Body of pancreas (tissue), 4 donors: ENCODE measurements at regions of chr6 and their contacts with region 1.

Region 1: DNA sequence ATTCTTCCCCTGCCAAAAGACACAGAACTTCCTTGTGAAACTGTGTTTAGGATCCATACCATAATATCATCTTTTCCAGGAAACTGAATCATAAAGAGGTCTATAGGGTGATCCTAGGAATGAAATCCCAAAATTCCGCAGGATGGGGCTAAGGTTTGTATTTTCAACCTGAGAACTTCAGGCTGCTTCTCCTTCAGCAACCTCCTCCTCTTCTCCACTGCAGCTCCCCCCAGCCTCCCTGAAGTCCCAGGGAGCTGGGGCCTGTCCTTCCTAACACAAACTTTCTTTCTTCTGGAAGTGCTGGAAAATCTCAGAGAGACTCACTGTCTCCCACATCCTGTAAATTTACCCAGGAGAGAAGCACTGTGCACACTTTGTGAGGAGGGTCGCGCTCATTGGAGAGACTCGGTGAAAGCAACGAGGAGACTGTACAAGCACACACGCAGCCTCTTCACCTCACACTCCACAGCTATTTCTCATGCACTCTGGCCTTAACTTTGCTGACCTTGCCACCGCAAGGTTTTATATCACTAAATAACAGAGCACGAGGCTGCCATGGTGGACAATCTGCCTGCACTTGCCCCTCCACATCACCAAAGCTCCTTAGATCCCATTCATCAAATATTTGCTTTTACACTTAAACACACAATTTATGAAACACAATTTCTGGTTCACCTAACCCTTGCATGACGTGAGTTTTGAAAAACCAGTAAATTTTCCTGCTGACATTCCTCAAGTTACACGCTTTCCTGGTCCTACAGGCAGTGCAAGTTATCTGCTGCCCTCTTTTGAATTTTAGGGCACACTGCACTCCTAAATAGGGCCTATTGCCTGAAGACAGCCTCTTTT is 14.3 kb downstream of the ID4 start:
- DNase-seq: peak; percentile 39 to 76 (median 52)
- ATAC-seq: peak; percentile 97
- H3K4me3 ChIP-seq: no peak overlapping the region
- H3K27ac ChIP-seq: peak overlapping the region in 3 of 4 donors; percentile 25 to 46 (median 44)
- H3K4me1 ChIP-seq: peaks cover 6% of the 10 kb centered on the region
- H3K27me3 ChIP-seq: no peaks in the 10 kb centered on the region
- CTCF ChIP-seq: peak; percentile 82 to 97 (median 89)
- POLR2A ChIP-seq: no peak

Region 2: DNA sequence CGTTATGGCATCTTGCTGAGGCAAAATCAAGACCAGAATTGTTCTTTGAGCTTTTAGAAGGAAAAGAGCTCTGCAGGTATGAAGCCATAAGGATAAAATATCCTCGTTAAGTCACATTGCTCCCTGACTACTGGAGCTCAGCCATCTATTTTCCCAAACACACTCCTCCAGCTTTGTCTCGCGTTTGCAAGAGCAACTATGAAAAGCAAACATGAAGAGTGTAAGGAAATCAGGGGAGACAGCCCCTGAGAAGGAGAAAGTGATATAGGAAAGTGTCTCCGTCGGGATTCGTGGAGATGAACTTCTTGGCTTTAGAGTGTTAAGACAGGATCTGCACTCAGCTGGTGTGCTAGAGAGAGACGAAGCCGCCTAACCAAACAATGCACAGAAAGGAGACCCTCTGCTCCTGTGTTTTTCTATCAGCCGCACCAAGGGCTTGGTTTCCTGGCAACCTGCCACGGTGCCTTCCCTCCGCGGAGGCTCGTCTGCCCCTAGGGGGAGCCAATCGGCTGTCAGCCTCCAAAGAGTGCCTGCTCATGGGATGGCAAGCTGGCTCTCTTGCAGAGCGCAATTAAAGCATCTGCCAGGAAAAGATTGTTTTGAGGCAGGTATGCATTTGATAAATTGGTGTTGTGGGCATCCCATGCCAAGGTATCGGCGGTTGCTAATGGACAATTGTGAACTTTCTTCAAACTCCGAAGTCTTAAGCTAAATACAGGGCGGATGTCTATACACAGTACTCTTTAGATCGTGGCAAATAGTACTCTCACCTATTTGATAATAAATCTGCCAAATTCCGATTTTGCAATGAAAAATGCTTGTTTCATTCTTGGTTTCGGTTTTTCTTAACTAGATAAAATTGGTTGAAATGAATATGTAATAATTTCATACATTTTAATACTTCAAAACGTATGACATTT is 861.1 kb before region 1 on chr6:
- intact Hi-C with region 1: loop called (anchors 10 kb)
- DNase-seq: peak; percentile 64 to 82 (median 75)
- ATAC-seq: peak; percentile 67
- H3K4me3 ChIP-seq: no peak overlapping the region
- H3K27ac ChIP-seq: no peak overlapping the region
- H3K4me1 ChIP-seq: no peaks in the 10 kb centered on the region
- H3K27me3 ChIP-seq: no peaks in the 10 kb centered on the region
- CTCF ChIP-seq: peak; percentile 41 to 65 (median 51)
- POLR2A ChIP-seq: no peak